BJ (cell line): ENCODE measurements at regions of chr17 and their contacts with region 1.

Region 1: GRCh38 chr17:42517516-42517915 is 18.5 kb upstream of the NAGLU start:
- DNase-seq: peak; percentile 57
- H3K4me3 ChIP-seq: no peak overlapping the region
- H3K27me3 ChIP-seq: no peaks in the 10 kb centered on the region
- CTCF ChIP-seq: peak; percentile 96

Region 2: GRCh38 chr17:42214156-42214555 is 303.4 kb before region 1 on chr17:
- CTCF ChIA-PET with region 1: no interaction called
- POLR2A ChIA-PET with region 1: no interaction called
- DNase-seq: no peak
- H3K4me3 ChIP-seq: no peak overlapping the region
- H3K27me3 ChIP-seq: no peaks in the 10 kb centered on the region
- CTCF ChIP-seq: no peak

Region 3: GRCh38 chr17:42296012-42296411 is 221.5 kb before region 1 on chr17:
- CTCF ChIA-PET with region 1: no interaction called
- POLR2A ChIA-PET with region 1: no interaction called
- DNase-seq: no peak
- H3K4me3 ChIP-seq: no peak overlapping the region
- H3K27me3 ChIP-seq: no peaks in the 10 kb centered on the region
- CTCF ChIP-seq: no peak

Region 4: GRCh38 chr17:42312285-42313130 is 205.0 kb before region 1 on chr17:
- CTCF ChIA-PET with region 1: interaction called, 30 read pairs
- POLR2A ChIA-PET with region 1: interaction called, 5 read pairs
- DNase-seq: no peak
- H3K4me3 ChIP-seq: no peak overlapping the region
- H3K27me3 ChIP-seq: no peaks in the 10 kb centered on the region
- CTCF ChIP-seq: peak; percentile 77

Region 5: DNA sequence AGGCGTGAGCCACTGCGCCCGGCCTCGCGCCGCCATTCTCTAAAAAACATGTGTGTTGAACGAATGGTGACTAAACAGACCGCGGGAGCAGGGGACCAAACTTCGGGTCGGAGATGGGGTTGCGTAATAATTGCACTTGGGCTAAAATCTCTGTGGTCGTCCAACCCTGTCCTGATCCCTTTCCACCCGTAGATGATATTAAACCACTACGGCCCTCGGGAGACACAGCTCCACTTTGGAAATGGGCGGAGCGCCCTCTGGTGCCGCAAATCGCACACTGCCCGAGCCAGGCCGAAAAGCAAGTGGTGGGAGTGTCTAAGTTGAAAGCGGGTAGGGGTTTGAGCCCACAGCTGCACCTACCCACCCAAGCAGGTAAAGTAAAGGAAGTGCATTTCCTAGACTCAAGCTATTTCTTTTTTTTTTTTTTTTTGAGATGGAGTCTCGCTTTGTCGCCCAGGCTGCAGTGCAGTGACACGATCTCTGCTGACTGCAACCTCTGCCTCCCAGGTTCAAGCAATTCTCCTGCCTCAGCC is 111.5 kb before region 1 on chr17:
- CTCF ChIA-PET with region 1: interaction called, 6 read pairs
- POLR2A ChIA-PET with region 1: interaction called, 10 read pairs
- DNase-seq: no peak
- H3K4me3 ChIP-seq: no peak overlapping the region
- H3K27me3 ChIP-seq: no peaks in the 10 kb centered on the region
- CTCF ChIP-seq: peak; percentile 79

Region 6: DNA sequence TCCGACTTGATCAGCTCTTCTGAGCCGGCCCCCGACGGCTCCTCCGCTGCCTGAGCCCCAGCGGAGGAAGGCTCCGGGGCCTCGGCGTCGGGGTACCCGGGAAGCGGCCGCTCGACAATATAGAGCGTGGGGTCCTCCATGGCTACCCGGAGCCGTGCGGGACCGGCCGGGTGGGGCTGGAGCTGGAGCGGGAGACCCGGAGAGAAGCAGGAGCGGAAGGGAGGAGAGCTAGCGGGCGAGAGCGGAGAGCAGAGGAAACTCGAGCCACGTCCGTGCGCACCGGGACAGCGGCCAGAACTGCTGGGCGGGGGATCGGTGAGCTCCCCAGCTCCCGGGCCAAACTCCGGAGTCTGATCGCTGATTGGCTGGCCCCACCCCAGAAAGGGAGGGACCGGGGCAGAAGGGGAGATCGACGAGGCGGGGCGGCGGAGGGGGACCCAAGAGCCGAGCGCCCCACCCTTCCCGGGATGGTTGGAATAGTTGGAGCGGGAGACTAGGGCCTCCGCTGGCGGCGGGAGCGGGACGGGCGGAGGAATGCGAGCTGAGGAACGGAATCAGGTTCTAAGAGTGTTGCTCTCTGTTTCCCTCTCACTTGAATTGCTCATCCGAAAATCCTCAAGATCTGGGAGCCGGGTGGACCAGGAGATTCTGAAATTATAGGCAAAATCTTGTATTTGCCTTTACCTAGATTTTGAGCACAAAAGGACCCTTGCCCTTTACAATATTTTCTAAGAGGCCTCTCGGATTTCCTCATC is 94.4 kb before region 1 on chr17 and contains the start of gene CAVIN1:
- CTCF ChIA-PET with region 1: interaction called, 35 read pairs
- POLR2A ChIA-PET with region 1: interaction called, 31 read pairs
- DNase-seq: peak; percentile 91
- H3K4me3 ChIP-seq: peak within 1 kb of the TSS; percentile 64
- H3K27me3 ChIP-seq: no peaks in the 10 kb centered on the region
- CTCF ChIP-seq: no peak
- polyA plus RNA-seq, gene CAVIN1: 607 and 734 TPM in 2 replicates

Region 7: GRCh38 chr17:42428141-42428944 is 89.2 kb before region 1 on chr17:
- CTCF ChIA-PET with region 1: interaction called, 35 read pairs
- POLR2A ChIA-PET with region 1: interaction called, 31 read pairs
- DNase-seq: peak; percentile 97
- H3K4me3 ChIP-seq: no peak overlapping the region
- H3K27me3 ChIP-seq: no peaks in the 10 kb centered on the region
- CTCF ChIP-seq: peak; percentile 86

Region 8: DNA sequence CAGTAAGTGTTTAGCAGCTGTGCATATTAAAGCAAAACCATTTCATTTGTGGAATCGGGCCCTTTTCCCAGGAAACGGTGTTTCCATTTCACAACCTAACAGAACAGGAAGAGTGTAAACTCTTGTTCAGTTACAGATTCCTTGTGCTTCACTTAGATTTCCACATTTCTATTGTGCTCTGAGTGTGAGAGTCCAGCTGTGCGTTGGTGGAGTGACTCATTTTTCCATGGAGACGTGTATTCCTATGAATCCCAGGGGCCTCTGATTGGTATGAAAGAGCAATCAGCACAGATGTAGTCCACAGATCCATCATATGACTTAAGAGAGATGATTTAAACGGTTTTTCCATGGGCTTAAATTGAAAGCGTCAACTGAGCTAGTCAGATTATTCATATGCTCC is 81.1 kb before region 1 on chr17:
- CTCF ChIA-PET with region 1: interaction called, 35 read pairs
- POLR2A ChIA-PET with region 1: no interaction called
- DNase-seq: peak; percentile 89
- H3K4me3 ChIP-seq: no peak overlapping the region
- H3K27me3 ChIP-seq: no peaks in the 10 kb centered on the region
- CTCF ChIP-seq: no peak